ENCODE measurements at regions of chr12 and their contacts with region 1.

Region 1: GRCh38 chr12:93237235-93237915 is 140.3 kb upstream of the NUDT4 start:
- DNase-seq: no peak
- ATAC-seq: no peak
- H3K4me3 ChIP-seq: no peak overlapping the region
- H3K4me3 Mint-ChIP-seq: no peak overlapping the region
- H3K27ac ChIP-seq: no peak overlapping the region
- H3K27ac Mint-ChIP-seq: no peak overlapping the region
- H3K4me1 ChIP-seq: no peaks in the 10 kb centered on the region
- H3K4me1 Mint-ChIP-seq: no peaks in the 10 kb centered on the region
- H3K27me3 ChIP-seq: no peaks in the 10 kb centered on the region
- H3K27me3 Mint-ChIP-seq: no peaks in the 10 kb centered on the region
- CTCF ChIP-seq: no peak

Region 2: DNA sequence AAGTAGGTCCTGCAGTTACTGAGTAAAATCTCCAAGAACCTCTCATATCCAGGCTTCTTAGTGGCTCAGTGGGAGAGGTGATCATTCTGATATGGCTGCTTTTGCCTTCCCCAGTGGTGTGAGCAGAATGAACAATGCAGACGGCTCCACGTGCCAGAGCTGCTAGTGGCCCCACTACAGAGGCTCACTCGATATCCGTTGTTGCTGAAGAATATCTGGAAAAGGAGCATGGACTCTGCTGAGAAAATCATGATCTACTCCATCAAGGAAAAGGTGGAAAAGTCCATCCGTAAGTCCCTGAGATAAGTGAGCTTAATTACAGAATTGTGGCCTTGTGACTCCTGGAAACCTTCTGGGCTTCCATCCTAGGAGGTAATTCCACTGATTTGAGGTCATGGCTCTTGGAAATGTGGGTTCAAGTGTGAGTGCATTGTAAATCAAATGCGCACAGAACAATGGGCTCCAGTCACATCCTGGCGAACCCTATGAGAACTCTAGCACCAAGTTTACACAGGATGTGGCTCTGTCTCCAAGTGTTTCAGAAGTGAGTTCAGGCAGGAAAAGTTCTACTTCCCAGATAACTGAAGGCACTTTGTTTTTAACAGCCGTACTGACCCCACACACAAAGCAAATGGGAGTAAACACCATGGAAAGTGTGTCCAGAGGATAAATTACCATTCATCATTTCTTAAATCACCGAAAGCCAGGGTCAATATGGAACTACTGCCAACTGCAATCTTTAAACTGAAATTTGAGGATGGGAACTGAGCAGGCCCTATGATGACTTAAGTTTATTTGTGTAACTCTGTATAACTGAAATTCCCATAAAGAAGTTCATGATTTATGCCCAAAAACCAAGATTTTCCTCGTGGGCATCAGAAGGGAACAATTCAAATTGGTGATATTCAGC is 483.1 kb before region 1 on chr12:
- CTCF ChIA-PET with region 1: no interaction called
- POLR2A ChIA-PET with region 1: no interaction called
- intact Hi-C with region 1: loop called in 1 of 2 experiments (anchors 5 kb)
- DNase-seq: no peak
- ATAC-seq: no peak
- H3K4me3 ChIP-seq: no peak overlapping the region
- H3K4me3 Mint-ChIP-seq: no peak overlapping the region
- H3K27ac ChIP-seq: no peak overlapping the region
- H3K27ac Mint-ChIP-seq: no peak overlapping the region
- H3K4me1 ChIP-seq: no peaks in the 10 kb centered on the region
- H3K4me1 Mint-ChIP-seq: peaks cover 3% of the 10 kb centered on the region
- H3K27me3 ChIP-seq: no peaks in the 10 kb centered on the region
- H3K27me3 Mint-ChIP-seq: no peaks in the 10 kb centered on the region
- CTCF ChIP-seq: no peak

Region 3: DNA sequence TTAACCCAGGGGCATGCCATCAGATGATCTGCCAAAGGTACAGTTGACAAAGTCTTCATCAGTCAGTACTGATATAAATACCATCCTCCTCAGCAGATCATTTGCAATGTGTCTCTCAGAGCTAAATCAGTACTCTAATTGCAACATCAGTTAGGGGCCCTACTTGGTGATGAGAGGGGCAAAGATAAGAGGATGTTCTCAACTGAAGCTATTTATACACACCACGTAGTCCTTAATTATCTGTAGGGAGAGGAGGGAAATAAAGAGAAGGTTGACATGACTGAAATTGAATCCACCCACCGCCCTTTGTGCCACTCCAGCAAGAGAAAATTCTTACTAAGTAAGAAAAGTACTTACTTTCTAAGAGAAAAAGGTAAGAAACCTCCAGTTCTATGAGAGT is 17.4 kb before region 1 on chr12:
- CTCF ChIA-PET with region 1: no interaction called
- POLR2A ChIA-PET with region 1: no interaction called
- intact Hi-C with region 1: no loop called
- DNase-seq: no peak
- ATAC-seq: no peak
- H3K4me3 ChIP-seq: no peak overlapping the region
- H3K4me3 Mint-ChIP-seq: no peak overlapping the region
- H3K27ac ChIP-seq: no peak overlapping the region
- H3K27ac Mint-ChIP-seq: no peak overlapping the region
- H3K4me1 ChIP-seq: no peaks in the 10 kb centered on the region
- H3K4me1 Mint-ChIP-seq: no peaks in the 10 kb centered on the region
- H3K27me3 ChIP-seq: no peaks in the 10 kb centered on the region
- H3K27me3 Mint-ChIP-seq: no peaks in the 10 kb centered on the region
- CTCF ChIP-seq: no peak

Region 4: GRCh38 chr12:93279565-93280412 is 42.4 kb after region 1 on chr12:
- CTCF ChIA-PET with region 1: no interaction called
- POLR2A ChIA-PET with region 1: no interaction called
- intact Hi-C with region 1: no loop called
- DNase-seq: no peak
- ATAC-seq: no peak
- H3K4me3 ChIP-seq: no peak overlapping the region
- H3K4me3 Mint-ChIP-seq: no peak overlapping the region
- H3K27ac ChIP-seq: no peak overlapping the region
- H3K27ac Mint-ChIP-seq: no peak overlapping the region
- H3K4me1 ChIP-seq: no peaks in the 10 kb centered on the region
- H3K4me1 Mint-ChIP-seq: no peaks in the 10 kb centered on the region
- H3K27me3 ChIP-seq: no peaks in the 10 kb centered on the region
- H3K27me3 Mint-ChIP-seq: no peaks in the 10 kb centered on the region
- CTCF ChIP-seq: no peak

Measured in CD8-positive, alpha-beta T cell (primary cell).